ENCODE measurements at regions of chr1 and their contacts with region 1.

Region 1: GRCh38 chr1:93552741-93553455 is 105.0 kb downstream of the FNBP1L start:
- DNase-seq: peak; percentile 71
- ATAC-seq: peak; percentile 77
- H3K4me3 ChIP-seq: no peak overlapping the region
- H3K27ac ChIP-seq: peak overlapping the region; percentile 0
- H3K4me1 ChIP-seq: peaks cover 41% of the 10 kb centered on the region
- H3K27me3 ChIP-seq: no peaks in the 10 kb centered on the region; a peak in 1 of 5 replicates
- CTCF ChIP-seq: no peak
- EP300 ChIP-seq: no peak
- POLR2A ChIP-seq: no peak
- RAD21 ChIP-seq: no peak

Region 2: GRCh38 chr1:93585059-93585966 is 32.4 kb after region 1 on chr1:
- CTCF ChIA-PET with region 1: no interaction called
- POLR2A ChIA-PET with region 1: no interaction called
- in situ Hi-C with region 1: no loop called
- intact Hi-C with region 1: loop called (anchors 2 kb)
- DNase-seq: peak; percentile 89
- ATAC-seq: peak; percentile 84
- H3K4me3 ChIP-seq: no peak overlapping the region
- H3K27ac ChIP-seq: peak overlapping the region; percentile 51
- H3K4me1 ChIP-seq: peaks cover 55% of the 10 kb centered on the region
- H3K27me3 ChIP-seq: no peaks in the 10 kb centered on the region
- CTCF ChIP-seq: no peak
- EP300 ChIP-seq: peak in 1 of 2 experiments; percentile 81; a peak in 2 of 4 replicates
- POLR2A ChIP-seq: 0 out of 4 replicates have a peak, but pooled peaks of 1 of the 2 experiments have one; percentile 32
- RAD21 ChIP-seq: 0 out of 2 replicates have a peak, but pooled peaks have one; percentile 17

Measured in HepG2 (cell line).